ENCODE measurements at regions of chr2 and their contacts with region 1.

Region 1: GRCh38 chr2:127897531-127898211 is 11.9 kb upstream of the AMMECR1L start:
- DNase-seq: no peak

Region 2: GRCh38 chr2:127917916-127918315 is 20.2 kb after region 1 on chr2:
- intact Hi-C with region 1: loop called (anchors 2 kb)
- DNase-seq: no peak

Measured in cardiac septum (tissue), 1 donor.